Activated T-helper 1 cell treated with anti-CD3 and anti-CD28 coated beads, Interleukin-12 subunit alpha, Interleukin-12 subunit beta, Interleukin-2, Interleukin-4 antibody, amounts not matched to agents 30 ng/mL and 10 ng/mL and 1 ng/mL, durations not matched to agents 14 hours and 24 hours and 36 hours (primary cell): ENCODE measurements at regions of chr4 and their contacts with region 1.

Region 1: GRCh38 chr4:52861879-52862616 is at the start of gene RASL11B:
- DNase-seq: peak; percentile 84
- H3K4me3 Mint-ChIP-seq: peak within 1 kb of the TSS; percentile 81
- H3K27ac Mint-ChIP-seq: no peak within 1 kb of the TSS
- H3K4me1 Mint-ChIP-seq: peaks cover 16% of the 10 kb centered on the region
- H3K27me3 Mint-ChIP-seq: peaks cover 36% of the 10 kb centered on the region
- total RNA-seq, gene RASL11B: 1.6 and 2.3 TPM in 2 replicates

Region 2: DNA sequence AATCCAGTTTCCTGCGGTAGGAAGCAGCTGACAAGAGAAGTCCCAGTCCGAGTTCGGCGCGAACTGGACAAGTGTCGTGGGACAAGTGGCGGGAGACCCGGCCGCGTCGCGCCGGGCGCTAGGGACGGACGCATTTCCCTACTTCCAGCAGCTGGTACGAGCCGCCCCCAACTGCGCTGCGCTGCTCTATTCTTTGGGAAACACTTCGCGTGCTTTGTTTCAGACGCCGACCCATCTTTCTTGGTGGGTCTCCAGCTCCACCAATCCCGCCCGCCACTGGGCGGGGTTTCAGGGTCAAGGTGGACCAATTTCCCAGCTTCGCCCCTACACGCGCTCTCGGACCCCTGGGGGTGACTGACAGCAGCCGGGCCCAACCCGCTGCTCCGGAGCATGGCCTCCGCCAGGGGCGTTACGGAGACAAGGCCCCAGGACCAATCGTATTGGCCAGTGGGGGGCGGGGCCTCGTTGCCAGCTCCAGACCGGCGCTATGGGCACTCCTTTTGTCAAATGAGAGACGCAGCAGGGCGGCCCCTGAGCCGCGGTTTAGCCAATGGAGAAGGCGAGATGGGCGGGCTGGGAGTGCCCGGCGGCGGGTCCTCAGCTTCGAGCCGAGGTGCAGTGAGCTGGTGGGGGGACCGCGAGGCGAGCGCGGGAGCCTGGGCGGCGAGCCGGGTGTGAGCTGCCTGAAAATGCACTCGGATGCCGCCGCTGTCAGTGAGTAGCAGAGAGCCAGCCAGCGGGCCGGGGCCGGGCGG is 1019.3 kb before region 1 on chr4 and contains the start of gene DCUN1D4:
- intact Hi-C with region 1: loop called (anchors 5 kb)
- DNase-seq: peak; percentile 98
- H3K4me3 Mint-ChIP-seq: peak within 1 kb of the TSS; percentile 95
- H3K27ac Mint-ChIP-seq: peak within 1 kb of the TSS; percentile 98
- H3K4me1 Mint-ChIP-seq: peaks cover 21% of the 10 kb centered on the region
- H3K27me3 Mint-ChIP-seq: peaks cover 9% of the 10 kb centered on the region
- total RNA-seq, gene DCUN1D4: 29.7 and 40.7 TPM in 2 replicates

Region 3: DNA sequence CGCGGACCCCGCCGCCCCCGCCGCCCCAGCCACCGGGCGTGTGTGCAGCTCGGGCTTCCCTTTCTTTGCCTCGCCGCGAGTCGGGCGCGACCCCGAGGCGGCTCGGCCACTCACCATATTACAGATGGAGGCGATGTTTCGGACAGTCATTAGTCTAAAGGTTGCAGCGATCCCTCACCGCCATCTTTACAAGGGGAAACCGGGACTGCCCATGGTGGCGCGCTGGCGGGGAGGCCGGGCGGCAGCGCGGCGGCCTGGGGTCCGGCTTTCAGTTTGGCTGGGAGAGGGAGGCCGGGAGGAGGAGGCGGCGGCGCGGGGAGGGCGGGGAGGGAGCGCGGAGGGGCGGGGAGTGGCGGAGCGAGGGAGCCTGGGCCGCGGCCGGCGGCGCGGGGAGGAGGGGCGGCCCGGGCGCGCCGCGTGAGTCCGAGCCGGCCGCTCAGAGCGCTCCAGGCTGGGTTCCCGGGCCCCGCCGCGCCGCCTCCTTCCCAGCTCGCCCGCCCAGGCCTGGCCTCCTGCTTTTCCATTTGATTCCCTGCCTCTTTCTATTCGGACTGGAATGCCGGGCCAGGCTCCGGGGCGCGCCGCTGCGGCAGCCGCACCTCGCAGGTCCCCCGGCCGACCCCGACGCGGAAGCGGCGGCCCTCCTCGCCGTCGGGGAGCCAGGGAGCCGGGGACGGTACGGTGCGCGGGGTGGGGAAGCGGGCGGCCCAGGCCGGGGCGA is 202.9 kb before region 1 on chr4 and contains the start of gene USP46:
- intact Hi-C with region 1: loop called (anchors 5 kb)
- DNase-seq: peak; percentile 30
- H3K4me3 Mint-ChIP-seq: peak within 1 kb of the TSS; percentile 86
- H3K27ac Mint-ChIP-seq: peak within 1 kb of the TSS; percentile 73
- H3K4me1 Mint-ChIP-seq: peaks cover 28% of the 10 kb centered on the region
- H3K27me3 Mint-ChIP-seq: peaks cover 14% of the 10 kb centered on the region
- total RNA-seq, gene USP46: 9.9 and 10.1 TPM in 2 replicates

Region 4: DNA sequence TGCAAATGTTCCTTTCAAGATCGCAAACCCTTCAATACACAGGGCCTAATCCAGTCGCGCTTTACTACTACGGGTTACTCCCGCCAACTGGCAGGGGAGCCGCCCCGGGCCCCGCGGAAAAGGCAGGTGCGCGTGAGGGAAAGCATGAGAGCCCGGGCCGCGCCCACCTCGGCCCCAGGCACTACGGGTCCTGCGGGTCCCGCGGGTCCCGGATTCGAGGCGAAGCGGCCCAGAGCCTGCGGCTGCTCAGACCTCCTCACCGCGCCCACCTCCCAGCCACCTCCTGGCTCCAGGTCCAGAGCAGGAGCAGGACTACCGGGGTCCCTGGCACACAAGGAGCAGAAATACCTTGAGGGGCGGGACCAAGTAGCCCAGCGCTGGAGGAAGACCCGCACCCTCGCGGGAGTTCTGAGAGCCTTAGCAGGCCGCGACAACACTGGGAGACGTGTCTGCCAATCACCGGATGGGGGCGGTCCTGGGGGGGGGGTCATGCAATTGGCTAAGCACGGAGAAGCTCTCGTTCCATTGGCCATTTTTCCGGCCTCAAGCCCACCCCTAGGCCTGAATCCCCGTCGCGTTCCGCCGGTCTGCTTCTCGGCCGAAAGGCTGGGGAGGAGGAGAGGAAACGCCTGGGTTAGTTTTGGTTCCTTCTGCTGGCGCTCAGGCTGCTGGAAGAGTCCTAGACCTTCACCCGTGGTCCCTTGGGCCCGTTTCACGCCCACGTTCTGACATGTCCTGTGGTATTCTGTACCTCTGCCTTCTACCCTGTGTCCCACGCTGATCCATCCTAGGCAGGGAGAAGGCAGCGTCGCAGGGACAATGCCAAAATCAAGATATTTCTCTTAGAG is 139.9 kb before region 1 on chr4:
- intact Hi-C with region 1: loop called (anchors 1 kb)
- DNase-seq: peak; percentile 84
- H3K4me3 Mint-ChIP-seq: peak overlapping the region; percentile 80
- H3K27ac Mint-ChIP-seq: peak overlapping the region; percentile 68
- H3K4me1 Mint-ChIP-seq: peaks cover 16% of the 10 kb centered on the region
- H3K27me3 Mint-ChIP-seq: peaks cover 10% of the 10 kb centered on the region

Region 5: DNA sequence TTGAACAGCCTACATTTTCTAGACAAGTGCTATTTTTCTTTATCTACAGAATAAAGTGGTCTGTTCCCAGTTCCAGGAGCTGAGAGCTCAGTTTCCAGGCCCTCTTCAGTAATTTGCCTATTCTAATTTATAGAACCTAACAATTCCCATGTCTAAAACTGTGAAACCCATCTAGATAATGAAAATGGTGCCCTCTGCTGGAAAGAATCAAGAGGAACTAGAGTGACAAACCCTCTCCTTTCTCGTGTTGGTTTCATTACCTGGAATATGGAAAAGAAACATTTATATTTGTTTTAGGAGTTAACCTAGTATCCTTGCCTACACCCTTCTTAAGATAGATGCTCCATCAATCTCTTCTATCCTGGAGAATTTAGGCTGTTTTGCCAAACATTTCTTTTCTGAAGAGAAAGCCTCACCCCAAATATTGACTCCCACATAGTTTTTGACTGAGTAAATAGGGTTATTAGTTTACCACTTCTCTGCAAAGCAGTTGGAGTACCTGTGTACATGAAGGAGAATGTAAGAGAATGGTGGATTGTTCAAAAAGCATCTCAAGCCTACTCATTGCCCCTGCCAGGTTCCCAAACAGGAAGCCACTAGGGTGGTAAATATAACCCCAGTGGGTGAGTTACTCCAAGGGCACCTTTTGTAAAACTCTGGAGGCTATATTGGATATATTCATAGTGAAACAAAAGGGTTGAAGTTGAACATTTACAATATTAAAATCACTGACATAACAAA is 121.7 kb after region 1 on chr4:
- intact Hi-C with region 1: loop called (anchors 2 kb)
- DNase-seq: no peak
- H3K4me3 Mint-ChIP-seq: no peak overlapping the region
- H3K27ac Mint-ChIP-seq: no peak overlapping the region
- H3K4me1 Mint-ChIP-seq: no peaks in the 10 kb centered on the region
- H3K27me3 Mint-ChIP-seq: no peaks in the 10 kb centered on the region

Region 6: GRCh38 chr4:53377319-53378170 is 515.5 kb after region 1 on chr4 and contains the start of gene FIP1L1:
- intact Hi-C with region 1: loop called (anchors 5 kb)
- DNase-seq: peak; percentile 94
- H3K4me3 Mint-ChIP-seq: peak within 1 kb of the TSS; percentile 92
- H3K27ac Mint-ChIP-seq: peak within 1 kb of the TSS; percentile 96
- H3K4me1 Mint-ChIP-seq: peaks cover 46% of the 10 kb centered on the region
- H3K27me3 Mint-ChIP-seq: peaks cover 6% of the 10 kb centered on the region
- total RNA-seq, gene FIP1L1: 118 and 123 TPM in 2 replicates